Kidney (tissue), 22 donors: ENCODE measurements at regions of chr10 and their contacts with region 1.

Region 1: DNA sequence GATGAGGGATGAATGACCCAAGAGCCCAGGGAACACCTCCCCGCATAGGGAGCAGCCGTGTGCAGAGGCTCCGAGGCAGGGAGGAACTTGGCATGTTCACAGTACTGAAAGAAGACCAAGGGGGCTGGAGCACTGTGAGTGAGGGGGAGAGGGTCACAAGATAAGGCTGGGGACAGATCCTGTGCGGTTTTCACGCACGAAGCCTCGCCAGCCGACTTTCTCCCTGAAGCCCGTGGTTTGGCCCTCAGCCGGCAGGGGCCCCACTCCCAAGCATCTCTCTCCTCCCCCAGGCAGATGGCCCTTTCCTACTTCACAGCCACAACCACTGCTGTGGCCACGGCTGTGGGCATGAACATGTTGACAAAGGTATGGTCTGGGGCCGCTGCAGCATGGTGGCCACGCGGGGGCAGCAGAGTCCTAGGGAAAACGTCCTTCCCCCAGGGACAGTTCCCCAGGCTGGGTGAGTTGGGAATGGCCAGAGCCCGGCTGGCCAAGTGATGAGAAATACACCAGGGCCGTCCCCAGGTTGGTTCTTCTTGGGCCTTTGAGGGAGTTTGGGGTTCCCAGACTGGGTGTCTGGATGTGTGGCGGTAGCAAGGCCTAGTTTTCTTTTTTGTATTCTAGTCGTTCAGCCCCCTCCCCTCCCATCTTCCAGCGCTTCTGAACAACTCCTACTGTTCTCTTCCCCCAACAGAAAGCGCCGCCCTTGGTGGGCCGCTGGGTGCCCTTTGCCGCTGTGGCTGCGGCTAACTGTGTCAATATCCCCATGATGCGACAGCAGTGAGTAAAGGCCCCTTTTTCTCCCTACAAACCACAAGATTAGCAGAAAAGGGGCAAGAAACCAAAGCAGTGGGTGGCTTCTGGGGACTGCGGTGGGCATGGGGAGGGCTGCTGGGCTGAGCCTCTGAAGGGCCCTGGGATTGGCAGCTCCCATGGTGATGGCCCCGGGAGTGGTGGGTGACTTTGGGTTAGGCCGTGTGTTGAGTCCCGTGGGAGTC is 14.4 kb upstream of the WBP1L start:
- DNase-seq: peak; percentile 85 to 94 (median 89)
- H3K4me3 ChIP-seq: no peak overlapping the region
- H3K27ac ChIP-seq: no peak overlapping the region
- H3K4me1 ChIP-seq: peaks cover 0 to 6% (median 4%) of the 10 kb centered on the region in 3 donors
- H3K27me3 ChIP-seq: no peaks in the 10 kb centered on the region
- CTCF ChIP-seq: peak; percentile 96

Region 2: GRCh38 chr10:102904346-102904745 is 175.0 kb after region 1 on chr10:
- intact Hi-C with region 1: loop called (anchors 5 kb)
- DNase-seq: no peak
- H3K4me3 ChIP-seq: no peak overlapping the region
- H3K27ac ChIP-seq: no peak overlapping the region
- H3K4me1 ChIP-seq: peaks cover 0 to 14% (median 0%) of the 10 kb centered on the region in 3 donors
- H3K27me3 ChIP-seq: no peaks in the 10 kb centered on the region
- CTCF ChIP-seq: no peak

Region 3: DNA sequence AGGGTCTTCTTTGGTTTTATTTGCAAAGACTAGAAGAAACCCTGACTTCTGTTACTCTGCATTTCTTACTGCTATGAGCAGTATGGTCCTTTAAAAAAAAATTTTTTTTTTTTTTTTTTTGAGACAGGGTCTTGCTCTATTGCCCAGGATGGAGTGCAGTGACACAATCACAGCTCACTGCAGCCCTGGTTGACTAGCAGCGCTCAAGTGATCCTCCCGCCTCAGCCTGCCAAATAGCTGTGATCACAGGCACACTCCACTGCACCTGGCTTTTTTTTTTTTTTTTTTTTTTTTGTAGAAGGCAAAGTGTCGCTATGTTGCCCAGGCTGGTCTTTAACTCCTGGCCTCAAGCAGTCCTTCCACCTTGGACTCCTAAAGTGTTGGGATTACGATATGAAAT is 206.2 kb after region 1 on chr10:
- intact Hi-C with region 1: no loop called
- DNase-seq: peak in 3 of 5 donors; percentile 31 to 44 (median 36)
- H3K4me3 ChIP-seq: no peak overlapping the region
- H3K27ac ChIP-seq: no peak overlapping the region
- H3K4me1 ChIP-seq: no peaks in the 10 kb centered on the region
- H3K27me3 ChIP-seq: no peaks in the 10 kb centered on the region
- CTCF ChIP-seq: no peak